Esophagus squamous epithelium (tissue), 5 donors: ENCODE measurements at regions of chr7 and their contacts with region 1.

Region 1: GRCh38 chr7:73809467-73809951 is 21.3 kb upstream of the CLDN4 start:
- DNase-seq: no peak
- H3K4me3 ChIP-seq: no peak overlapping the region
- H3K27ac ChIP-seq: peak overlapping the region in 2 of 4 donors; percentile 45 to 57
- H3K4me1 ChIP-seq: peaks cover 0 to 17% (median 0%) of the 10 kb centered on the region in 3 donors
- H3K27me3 ChIP-seq: peaks cover 0 to 15% (median 0%) of the 10 kb centered on the region in 4 donors
- CTCF ChIP-seq: no peak
- POLR2A ChIP-seq: no peak

Region 2: GRCh38 chr7:73844848-73845455 is 35.4 kb after region 1 on chr7:
- intact Hi-C with region 1: no loop called
- DNase-seq: no peak
- H3K4me3 ChIP-seq: no peak overlapping the region
- H3K27ac ChIP-seq: no peak overlapping the region
- H3K4me1 ChIP-seq: peaks cover 11 to 33% (median 14%) of the 10 kb centered on the region in 3 donors
- H3K27me3 ChIP-seq: no peaks in the 10 kb centered on the region
- CTCF ChIP-seq: no peak
- POLR2A ChIP-seq: no peak

Region 3: DNA sequence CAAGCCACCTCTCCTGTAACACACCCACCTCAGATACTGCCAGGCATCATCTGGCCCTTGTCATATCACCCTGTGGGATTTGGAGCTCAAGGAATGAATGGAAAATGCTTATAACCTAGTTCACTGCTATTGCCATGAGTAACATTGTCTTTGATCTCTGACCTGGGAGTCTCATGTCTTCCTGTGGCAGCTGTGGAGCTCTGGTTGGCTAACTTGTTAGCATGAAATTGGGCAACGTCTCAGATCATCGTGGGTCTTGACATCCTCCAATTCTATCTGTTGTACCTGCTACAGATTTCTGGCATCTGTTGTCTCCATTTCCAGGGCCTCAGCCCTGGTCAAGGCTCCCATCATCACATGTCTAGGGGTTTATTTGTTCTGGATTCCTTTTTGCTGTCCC is 49.3 kb after region 1 on chr7:
- intact Hi-C with region 1: loop called (anchors 5 kb)
- DNase-seq: no peak
- H3K4me3 ChIP-seq: no peak overlapping the region
- H3K27ac ChIP-seq: no peak overlapping the region
- H3K4me1 ChIP-seq: peaks cover 7 to 11% (median 9%) of the 10 kb centered on the region in 3 donors
- H3K27me3 ChIP-seq: peaks cover 0 to 15% (median 0%) of the 10 kb centered on the region in 4 donors
- CTCF ChIP-seq: no peak
- POLR2A ChIP-seq: no peak

Region 4: DNA sequence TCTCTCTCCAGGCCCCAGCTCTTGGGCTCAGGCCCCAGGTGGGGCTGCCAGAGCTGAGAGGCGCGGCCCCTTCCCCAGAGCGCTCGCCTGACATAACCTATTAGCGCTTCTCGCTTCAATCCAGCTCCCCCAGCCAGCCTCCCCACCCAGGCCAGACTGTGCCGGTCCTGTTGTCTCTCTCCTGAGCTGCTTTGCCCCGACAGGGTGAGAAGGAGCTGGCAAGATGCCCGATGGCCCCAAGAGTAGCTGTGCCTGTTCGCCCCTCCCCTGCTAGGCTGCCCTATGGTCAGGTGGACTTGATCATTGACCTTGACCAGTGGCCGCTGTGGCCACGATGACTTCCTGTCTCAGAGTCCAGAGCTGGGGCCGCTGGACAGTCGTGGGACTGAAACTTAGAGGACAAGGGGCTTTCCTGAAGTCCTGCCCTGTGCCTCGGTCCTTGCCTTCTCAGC is 60.6 kb after region 1 on chr7:
- intact Hi-C with region 1: no loop called
- DNase-seq: no peak
- H3K4me3 ChIP-seq: no peak overlapping the region
- H3K27ac ChIP-seq: peak overlapping the region in 3 of 4 donors; percentile 58 to 73 (median 60)
- H3K4me1 ChIP-seq: peaks cover 8 to 39% (median 27%) of the 10 kb centered on the region in 3 donors
- H3K27me3 ChIP-seq: no peaks in the 10 kb centered on the region
- CTCF ChIP-seq: no peak
- POLR2A ChIP-seq: no peak